AG04449 (cell line): ENCODE measurements at regions of chr9 and their contacts with region 1.

Region 1: DNA sequence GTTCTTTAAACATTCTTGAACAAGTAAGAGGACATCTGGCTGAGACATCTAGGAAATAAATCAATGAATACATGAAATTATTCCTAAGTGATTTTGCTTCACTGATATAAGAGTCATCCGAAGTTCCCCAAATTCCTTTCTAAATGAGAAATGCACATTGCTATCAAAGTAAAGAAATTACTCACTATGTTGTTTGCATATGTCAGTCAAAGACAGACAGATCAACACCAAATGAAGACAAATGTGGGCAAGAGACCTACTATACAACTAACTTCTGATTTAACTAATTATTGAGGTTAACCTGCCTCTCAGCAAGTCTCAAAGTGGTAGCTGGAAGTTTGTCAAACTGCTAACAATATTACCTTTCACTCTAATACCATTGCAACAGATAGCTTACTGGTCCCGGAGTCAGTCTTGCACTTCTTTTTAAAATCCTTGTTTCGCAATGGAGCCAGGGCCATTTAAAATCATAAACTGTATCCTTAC is 13.2 kb downstream of the TUT7 start:
- DNase-seq: no peak
- H3K4me3 ChIP-seq: no peak overlapping the region
- CTCF ChIP-seq: no peak

Region 2: GRCh38 chr9:86324901-86325300 is 16.1 kb before region 1 on chr9:
- CTCF ChIA-PET with region 1: interaction called, 14 read pairs
- POLR2A ChIA-PET with region 1: interaction called, 3 read pairs
- DNase-seq: no peak
- H3K4me3 ChIP-seq: no peak overlapping the region
- CTCF ChIP-seq: no peak